Heart right ventricle (tissue), 16 donors: ENCODE measurements at regions of chr11 and their contacts with region 1.

Region 1: DNA sequence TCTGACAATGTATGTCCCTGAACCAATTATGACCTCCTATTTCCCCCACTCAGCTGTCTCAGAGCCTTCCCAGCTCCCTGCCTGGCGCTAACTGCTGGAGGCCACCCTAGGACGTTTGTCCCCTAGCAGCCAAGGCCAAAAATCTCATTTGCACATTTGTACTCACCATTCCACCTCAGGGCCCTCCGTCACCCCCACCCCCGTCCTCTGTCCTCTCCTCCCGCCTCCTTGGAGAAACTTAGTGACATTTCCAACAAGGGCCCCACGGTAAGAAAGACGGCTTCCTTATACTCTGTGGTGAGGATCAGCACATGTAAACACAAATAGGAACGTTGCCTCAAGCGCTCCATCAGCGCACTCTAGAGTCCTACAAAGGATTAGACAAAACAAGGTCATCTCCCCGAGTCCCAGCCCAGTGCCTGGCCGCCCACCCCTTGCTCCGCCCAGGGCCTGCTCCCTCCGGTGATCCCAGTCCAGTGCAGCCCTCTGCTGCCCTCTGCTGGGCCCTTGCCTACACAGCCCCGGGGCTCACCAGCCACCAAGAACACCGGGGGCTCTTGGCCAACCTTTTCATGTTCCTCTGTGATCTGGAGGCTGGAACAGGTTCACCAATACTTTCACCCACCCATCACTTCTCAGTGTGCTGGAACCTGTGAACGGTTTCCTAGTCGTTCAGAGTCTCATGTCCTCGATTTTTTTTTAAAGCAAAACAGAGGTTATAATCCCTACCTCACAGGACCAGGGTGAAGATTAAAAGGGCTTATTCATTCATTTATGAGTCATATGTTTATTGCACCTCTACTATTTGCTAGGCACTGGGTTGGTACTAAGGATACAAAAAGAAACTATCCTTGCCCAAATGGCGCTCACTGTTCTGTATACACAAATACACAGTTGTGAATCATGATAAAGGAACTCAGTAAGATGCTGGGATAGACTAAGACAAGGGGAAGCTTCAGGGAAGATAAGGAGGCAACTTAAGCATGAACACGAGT is 15.3 kb upstream of the CTR9 start:
- DNase-seq: peak; percentile 94 to 96
- ATAC-seq: peak; percentile 99 to 100 (median 100)
- H3K4me3 ChIP-seq: peak overlapping the region in 6 of 10 donors; percentile 19 to 37 (median 30)
- H3K27ac ChIP-seq: peak overlapping the region in 9 of 10 donors; percentile 50 to 76 (median 66)
- H3K4me1 ChIP-seq: peaks cover 0 to 13% (median 4%) of the 10 kb centered on the region in 9 donors
- H3K27me3 ChIP-seq: no peaks in the 10 kb centered on the region
- CTCF ChIP-seq: peak; percentile 98 to 100 (median 99)

Region 2: DNA sequence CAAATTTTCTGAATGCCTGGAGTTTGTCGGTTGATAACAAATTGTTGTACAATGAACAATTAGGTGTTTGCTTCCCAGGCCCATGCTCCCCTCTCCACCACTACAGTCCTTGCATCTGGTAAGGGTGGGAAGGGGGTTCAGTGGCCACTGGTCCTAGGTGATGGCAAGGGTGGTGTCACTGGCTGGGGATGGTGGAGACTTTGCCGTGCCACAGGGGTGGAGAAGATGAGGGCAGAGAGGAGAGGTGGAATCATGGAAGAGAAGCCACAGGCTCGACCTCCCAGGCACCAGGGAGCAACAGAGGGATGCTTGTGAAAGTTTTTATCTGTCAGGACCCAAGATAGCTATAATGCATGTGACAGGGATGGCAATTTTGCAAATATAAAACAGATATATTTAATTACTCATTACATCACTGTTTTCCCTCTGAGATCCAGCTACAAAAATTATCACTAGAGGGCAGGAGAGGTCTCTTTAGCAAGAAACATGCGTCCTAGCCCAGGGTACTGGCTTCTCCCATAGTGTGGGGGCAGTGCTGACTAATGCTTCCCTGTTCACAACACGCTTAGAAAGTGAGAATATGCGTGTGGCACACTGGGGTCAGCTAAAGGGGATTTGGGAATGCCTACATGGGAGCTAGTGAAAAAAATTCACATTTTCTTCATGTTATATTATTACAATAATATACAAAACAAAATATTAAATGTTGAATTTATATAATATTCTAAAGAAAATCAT is 329.8 kb before region 1 on chr11:
- intact Hi-C with region 1: loop called (anchors 1 to 5 kb)
- DNase-seq: peak in 1 of 2 donors; percentile 79
- ATAC-seq: peak; percentile 85 to 94 (median 90)
- H3K4me3 ChIP-seq: no peak overlapping the region
- H3K27ac ChIP-seq: no peak overlapping the region
- H3K4me1 ChIP-seq: peaks cover 0 to 34% (median 13%) of the 10 kb centered on the region in 9 donors
- H3K27me3 ChIP-seq: no peaks in the 10 kb centered on the region
- CTCF ChIP-seq: peak; percentile 52 to 84 (median 78)

Region 3: DNA sequence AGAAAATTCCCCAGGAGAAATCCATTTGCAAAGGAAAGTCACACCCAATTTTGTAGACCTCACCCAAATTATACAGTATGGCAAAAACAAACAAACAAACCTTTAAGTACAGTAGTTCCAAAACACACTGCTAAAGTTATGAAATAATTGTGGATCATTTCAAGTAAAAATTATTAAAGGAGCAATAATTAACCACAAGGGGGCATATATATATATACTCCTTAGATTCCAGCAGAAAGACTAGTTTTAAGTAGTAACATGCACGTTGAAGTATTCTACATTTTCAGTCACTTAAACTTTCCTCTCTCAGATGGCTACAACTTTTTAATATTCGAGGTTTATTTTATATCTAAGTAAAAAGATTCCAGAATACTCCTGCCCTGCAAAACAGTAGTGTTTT is 221.6 kb before region 1 on chr11:
- intact Hi-C with region 1: loop called in 9 of 10 experiments (anchors 1 to 5 kb)
- DNase-seq: no peak
- ATAC-seq: no peak
- H3K4me3 ChIP-seq: no peak overlapping the region
- H3K27ac ChIP-seq: no peak overlapping the region
- H3K4me1 ChIP-seq: peaks cover 0 to 12% (median 7%) of the 10 kb centered on the region in 9 donors
- H3K27me3 ChIP-seq: no peaks in the 10 kb centered on the region
- CTCF ChIP-seq: peak; percentile 13 to 56 (median 44)

Region 4: GRCh38 chr11:10564696-10565318 is 171.0 kb before region 1 on chr11:
- intact Hi-C with region 1: loop called in 1 of 10 experiments (anchors 1 kb)
- DNase-seq: no peak
- ATAC-seq: no peak
- H3K4me3 ChIP-seq: peak overlapping the region in 3 of 10 donors; percentile 0 to 48 (median 25)
- H3K27ac ChIP-seq: peak overlapping the region in 1 of 10 donors; percentile 87
- H3K4me1 ChIP-seq: peaks cover 0 to 34% (median 4%) of the 10 kb centered on the region in 9 donors
- H3K27me3 ChIP-seq: no peaks in the 10 kb centered on the region
- CTCF ChIP-seq: peak in 8 of 9 donors; percentile 7 to 50 (median 42)

Region 5: GRCh38 chr11:10653926-10654810 is 81.6 kb before region 1 on chr11:
- intact Hi-C with region 1: loop called in 3 of 10 experiments (anchors 10 kb)
- DNase-seq: no peak
- ATAC-seq: peak in 5 of 8 donors; percentile 46 to 68 (median 62)
- H3K4me3 ChIP-seq: no peak overlapping the region
- H3K27ac ChIP-seq: peak overlapping the region in 6 of 10 donors; percentile 21 to 77 (median 42)
- H3K4me1 ChIP-seq: peaks cover 5 to 72% (median 30%) of the 10 kb centered on the region in 9 donors
- H3K27me3 ChIP-seq: no peaks in the 10 kb centered on the region
- CTCF ChIP-seq: peak; percentile 36 to 81 (median 74)

Region 6: GRCh38 chr11:10866893-10867331 is 131.1 kb after region 1 on chr11:
- intact Hi-C with region 1: no loop called
- DNase-seq: no peak
- ATAC-seq: peak in 5 of 8 donors; percentile 46 to 69 (median 56)
- H3K4me3 ChIP-seq: no peak overlapping the region
- H3K27ac ChIP-seq: peak overlapping the region in 9 of 10 donors; percentile 6 to 73 (median 51)
- H3K4me1 ChIP-seq: peaks cover 0 to 43% (median 28%) of the 10 kb centered on the region in 9 donors
- H3K27me3 ChIP-seq: no peaks in the 10 kb centered on the region
- CTCF ChIP-seq: no peak